Common myeloid progenitor, CD34-positive (primary cell): ENCODE measurements at regions of chr11 and their contacts with region 1.

Region 1: DNA sequence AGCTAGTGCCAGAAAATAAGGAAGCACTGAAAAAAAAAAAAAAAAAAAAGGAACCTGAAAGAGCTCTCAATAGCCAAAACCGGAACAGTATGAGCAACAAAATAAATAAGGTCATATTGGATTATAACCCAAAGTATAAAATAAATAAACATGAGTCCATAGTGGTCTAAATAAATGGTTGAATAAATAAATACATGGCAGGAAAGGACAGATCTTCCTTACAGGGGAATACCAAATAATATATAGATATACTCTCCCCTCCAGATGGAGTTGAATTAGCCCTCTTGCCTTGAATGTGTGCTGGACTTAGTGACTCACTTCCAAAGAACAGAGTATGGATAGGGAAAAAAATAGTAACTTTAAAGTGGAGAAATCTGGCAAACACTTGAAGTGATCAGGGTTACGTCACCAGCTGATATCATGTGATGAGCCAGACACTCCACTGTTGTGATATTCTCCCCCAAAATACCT is 14.3 kb upstream of the ARRB1 start:
- DNase-seq: peak in 2 of 3 donors; percentile 71 to 79
- H3K4me3 ChIP-seq: peak overlapping the region in 1 of 7 experiments; percentile 2
- H3K27ac ChIP-seq: no peak overlapping the region
- H3K4me1 ChIP-seq: peaks cover 0 to 58% (median 21%) of the 10 kb centered on the region in 4 experiments
- H3K27me3 ChIP-seq: no peaks in the 10 kb centered on the region

Region 2: GRCh38 chr11:75160192-75160757 is 205.5 kb before region 1 on chr11:
- CTCF ChIA-PET with region 1: no interaction called
- POLR2A ChIA-PET with region 1: no interaction called
- DNase-seq: no peak
- H3K4me3 ChIP-seq: no peak overlapping the region
- H3K27ac ChIP-seq: no peak overlapping the region
- H3K4me1 ChIP-seq: no peaks in the 10 kb centered on the region
- H3K27me3 ChIP-seq: no peaks in the 10 kb centered on the region

Region 3: GRCh38 chr11:75351791-75352587 is 13.8 kb before region 1 on chr11:
- CTCF ChIA-PET with region 1: interaction called, 13 read pairs
- POLR2A ChIA-PET with region 1: interaction called, 3 read pairs
- DNase-seq: peak; percentile 83 to 93 (median 88)
- H3K4me3 ChIP-seq: peak overlapping the region; percentile 65 to 93 (median 81)
- H3K27ac ChIP-seq: peak overlapping the region; percentile 40 to 77
- H3K4me1 ChIP-seq: peaks cover 11 to 67% (median 60%) of the 10 kb centered on the region in 4 experiments
- H3K27me3 ChIP-seq: no peaks in the 10 kb centered on the region